Activated CD4-positive, alpha-beta T cell treated with anti-CD3 and anti-CD28 coated beads for 36 hours (primary cell): ENCODE measurements at regions of chr17 and their contacts with region 1.

Region 1: DNA sequence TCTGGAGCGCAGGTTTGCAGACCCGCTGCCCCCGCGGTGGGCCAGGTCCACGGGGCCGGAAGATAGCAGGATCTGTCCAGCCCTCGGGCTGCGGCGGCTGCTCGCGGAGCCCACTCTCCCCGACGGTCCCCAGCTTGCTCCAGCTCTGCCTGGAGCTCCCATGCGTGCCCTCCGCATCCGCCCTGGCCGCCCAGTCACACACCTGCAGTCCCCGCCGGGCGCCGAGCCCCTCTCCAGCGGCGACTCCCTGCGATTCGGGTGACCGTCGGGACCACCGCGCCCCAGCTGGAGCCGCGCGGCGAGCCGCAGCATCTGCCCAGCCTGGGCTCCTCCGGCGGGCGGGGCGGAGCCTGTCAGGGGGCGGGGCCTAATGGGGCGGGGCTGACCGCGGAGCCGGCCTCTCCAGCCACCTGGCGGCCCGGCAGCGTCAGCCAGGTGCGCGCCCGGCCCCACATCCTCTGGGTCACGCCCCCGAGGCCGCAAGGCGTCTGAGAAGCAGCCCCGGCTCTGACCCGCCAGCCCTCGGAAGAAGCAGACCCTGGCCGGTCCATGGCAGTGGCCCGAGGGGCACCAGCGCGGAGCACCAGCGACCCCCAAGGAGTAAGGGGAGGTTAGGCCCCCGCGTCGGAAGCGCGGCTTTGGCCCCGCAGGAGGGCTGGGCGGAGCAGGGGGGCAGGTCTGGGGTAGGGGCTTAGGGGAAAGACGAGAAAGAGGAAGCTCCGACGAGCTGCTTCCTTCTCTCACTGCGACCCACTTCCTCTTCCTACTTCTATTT is at the start of gene PIK3R5:
- DNase-seq: peak; percentile 91
- ATAC-seq: peak; percentile 76
- H3K4me3 Mint-ChIP-seq: peak within 1 kb of the TSS; percentile 81
- H3K27ac Mint-ChIP-seq: peak within 1 kb of the TSS; percentile 87
- H3K4me1 Mint-ChIP-seq: peaks cover 46% of the 10 kb centered on the region
- H3K27me3 Mint-ChIP-seq: no peaks in the 10 kb centered on the region
- total RNA-seq, gene PIK3R5: 20.4 to 29.2 TPM

Region 2: DNA sequence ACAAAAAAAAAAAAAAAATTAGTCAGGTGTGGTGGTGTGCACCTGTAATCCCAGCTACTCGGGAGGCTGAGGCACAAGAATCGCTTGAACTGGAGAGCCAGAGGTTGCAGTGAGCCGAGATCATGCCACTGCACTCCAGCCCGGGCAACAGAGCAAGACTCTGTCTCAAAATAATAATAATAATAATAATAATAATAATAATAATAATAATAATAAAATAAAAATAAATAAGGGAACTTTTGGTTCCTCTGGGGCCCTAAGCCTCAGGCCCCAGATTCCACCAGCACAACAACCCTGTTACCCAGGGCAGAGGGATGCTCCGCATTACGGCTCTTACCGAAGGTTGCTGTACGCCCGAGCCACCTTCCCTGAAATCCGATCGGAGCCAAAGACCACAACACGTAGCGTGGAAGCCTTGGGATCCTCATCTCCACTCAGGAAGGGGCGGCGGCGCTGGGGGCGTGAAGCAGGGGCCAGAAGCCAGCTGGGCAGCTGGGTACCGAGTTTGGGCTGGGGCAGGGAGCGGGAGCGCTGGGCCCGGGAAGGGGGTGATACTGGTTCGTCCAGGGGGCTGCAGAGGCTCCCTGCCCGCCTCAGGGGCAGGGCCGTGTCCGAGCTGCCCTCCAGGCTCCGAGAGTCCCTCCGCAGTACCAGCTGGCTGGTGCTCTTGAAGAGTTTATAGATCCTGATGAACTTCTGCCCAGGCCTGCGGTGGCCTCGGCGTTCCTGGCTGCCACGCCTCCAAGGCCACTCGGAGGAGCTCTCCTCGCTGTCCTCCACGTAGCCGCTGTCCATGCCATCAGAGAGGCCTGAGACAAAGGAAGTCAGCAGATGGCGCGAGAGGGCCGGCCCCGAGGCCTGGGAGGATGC is 77.5 kb before region 1 on chr17:
- CTCF ChIA-PET with region 1: interaction called, 3 read pairs
- POLR2A ChIA-PET with region 1: no interaction called
- intact Hi-C with region 1: loop called in 1 of 2 experiments (anchors 1 kb)
- DNase-seq: no peak
- ATAC-seq: no peak
- H3K4me3 Mint-ChIP-seq: no peak overlapping the region
- H3K27ac Mint-ChIP-seq: no peak overlapping the region
- H3K4me1 Mint-ChIP-seq: peaks cover 12% of the 10 kb centered on the region
- H3K27me3 Mint-ChIP-seq: no peaks in the 10 kb centered on the region

Region 3: GRCh38 chr17:8925808-8926207 is 39.8 kb before region 1 on chr17:
- CTCF ChIA-PET with region 1: interaction called, 3 read pairs
- POLR2A ChIA-PET with region 1: no interaction called
- intact Hi-C with region 1: loop called in 1 of 2 experiments (anchors 5 kb)
- DNase-seq: no peak
- ATAC-seq: no peak
- H3K4me3 Mint-ChIP-seq: no peak overlapping the region
- H3K27ac Mint-ChIP-seq: no peak overlapping the region
- H3K4me1 Mint-ChIP-seq: peaks cover 34% of the 10 kb centered on the region
- H3K27me3 Mint-ChIP-seq: no peaks in the 10 kb centered on the region

Region 4: DNA sequence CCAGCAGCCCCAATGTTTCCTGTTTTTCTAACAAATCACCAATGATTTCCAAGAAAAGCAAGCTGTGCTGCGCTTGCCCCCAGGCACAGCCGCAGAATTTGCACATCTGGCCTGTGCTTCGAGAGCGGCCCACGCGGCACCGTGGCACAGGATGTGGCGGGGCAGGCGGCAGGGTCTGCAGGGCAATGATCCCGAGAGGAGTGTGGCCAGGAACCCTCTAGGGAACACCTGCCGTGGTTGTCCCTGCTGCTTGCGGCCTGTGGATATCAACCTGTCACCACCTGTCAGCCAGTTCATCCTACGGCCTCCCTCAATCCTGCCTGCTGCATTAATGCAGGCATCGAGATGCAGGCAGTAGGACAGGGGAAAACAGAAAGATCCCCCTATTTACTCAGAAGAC is 24.1 kb before region 1 on chr17:
- CTCF ChIA-PET with region 1: interaction called, 4 read pairs
- POLR2A ChIA-PET with region 1: no interaction called
- intact Hi-C with region 1: loop called in 1 of 2 experiments (anchors 1 kb)
- DNase-seq: peak; percentile 84
- ATAC-seq: peak; percentile 51
- H3K4me3 Mint-ChIP-seq: peak overlapping the region; percentile 52
- H3K27ac Mint-ChIP-seq: peak overlapping the region; percentile 89
- H3K4me1 Mint-ChIP-seq: peaks cover 75% of the 10 kb centered on the region
- H3K27me3 Mint-ChIP-seq: no peaks in the 10 kb centered on the region

Region 5: GRCh38 chr17:8949061-8949661 is 16.4 kb before region 1 on chr17:
- CTCF ChIA-PET with region 1: interaction called, 8 read pairs
- POLR2A ChIA-PET with region 1: interaction called, 4 read pairs
- intact Hi-C with region 1: loop called (anchors 1 kb)
- DNase-seq: peak; percentile 62
- ATAC-seq: peak; percentile 75
- H3K4me3 Mint-ChIP-seq: peak overlapping the region; percentile 61
- H3K27ac Mint-ChIP-seq: peak overlapping the region; percentile 79
- H3K4me1 Mint-ChIP-seq: peaks cover 86% of the 10 kb centered on the region
- H3K27me3 Mint-ChIP-seq: no peaks in the 10 kb centered on the region

Region 6: DNA sequence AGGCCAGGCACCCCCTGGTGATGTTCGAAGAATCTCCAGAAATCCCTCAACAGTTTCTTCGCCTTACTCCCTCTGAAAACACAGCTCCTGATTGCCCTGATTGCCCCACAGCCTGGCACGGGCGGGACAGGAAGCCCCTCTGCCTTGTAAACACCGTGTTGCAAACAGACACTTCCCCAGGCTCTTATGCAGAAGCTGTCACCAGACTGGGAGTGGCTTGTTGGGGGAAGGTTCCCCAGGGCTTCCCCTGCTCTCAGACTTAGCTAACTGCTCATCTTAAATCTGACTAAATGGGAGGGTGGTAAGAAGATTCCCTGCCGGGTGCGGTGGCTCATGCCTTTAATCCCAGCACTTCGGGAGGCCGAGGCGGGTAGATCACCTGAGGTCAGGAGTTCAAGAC is 11.2 kb before region 1 on chr17:
- CTCF ChIA-PET with region 1: interaction called, 8 read pairs
- POLR2A ChIA-PET with region 1: interaction called, 4 read pairs
- intact Hi-C with region 1: loop called (anchors 1 kb)
- DNase-seq: peak; percentile 85
- ATAC-seq: peak; percentile 73
- H3K4me3 Mint-ChIP-seq: peak overlapping the region; percentile 2
- H3K27ac Mint-ChIP-seq: peak overlapping the region; percentile 86
- H3K4me1 Mint-ChIP-seq: peaks cover 95% of the 10 kb centered on the region
- H3K27me3 Mint-ChIP-seq: no peaks in the 10 kb centered on the region